Heart left ventricle (tissue), 16 donors: ENCODE measurements at regions of chr18 and their contacts with region 1.

Region 1: GRCh38 chr18:28176933-28177827 is at the start of gene CDH2:
- DNase-seq: peak; percentile 69 to 84 (median 78)
- ATAC-seq: peak; percentile 49 to 76 (median 66)
- H3K4me3 ChIP-seq: peak within 1 kb of the TSS; percentile 65 to 91 (median 75)
- H3K27ac ChIP-seq: peak within 1 kb of the TSS; percentile 75 to 97 (median 89)
- H3K4me1 ChIP-seq: peaks cover 0 to 11% (median 0%) of the 10 kb centered on the region in 12 donors
- H3K27me3 ChIP-seq: peaks cover 0 to 61% (median 13%) of the 10 kb centered on the region in 9 donors
- CTCF ChIP-seq: peak in 5 of 12 donors; percentile 12 to 35 (median 18)
- POLR2A ChIP-seq: peak; percentile 14 to 76
- total RNA-seq, gene CDH2: 313 to 594 (median 411) TPM

Region 2: DNA sequence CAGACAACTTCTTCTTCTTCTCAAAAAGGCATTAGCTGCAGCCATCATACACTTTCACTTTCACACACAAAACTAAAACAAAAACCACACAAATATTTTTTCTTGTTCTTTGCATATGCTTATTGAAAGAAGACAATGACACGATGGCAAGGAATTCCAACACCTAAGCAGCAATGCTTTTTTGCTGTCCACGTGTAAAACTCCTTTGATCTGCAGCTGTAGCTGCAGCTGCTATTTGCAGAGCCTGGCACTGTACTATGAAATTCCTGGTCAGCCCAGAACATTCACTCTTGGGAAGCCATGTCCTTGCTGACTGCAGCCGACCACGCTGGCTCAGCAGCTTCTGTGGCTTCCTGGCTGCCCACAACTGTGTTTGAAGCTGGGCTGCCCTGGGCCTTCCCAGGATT is 316.5 kb before region 1 on chr18:
- intact Hi-C with region 1: loop called in 1 of 10 experiments (anchors 5 kb)
- DNase-seq: peak in 4 of 5 donors; percentile 19 to 46 (median 34)
- ATAC-seq: peak; percentile 62 to 93 (median 81)
- H3K4me3 ChIP-seq: no peak overlapping the region
- H3K27ac ChIP-seq: peak overlapping the region in 5 of 12 donors; percentile 12 to 49 (median 38)
- H3K4me1 ChIP-seq: peaks cover 0 to 24% (median 0%) of the 10 kb centered on the region in 12 donors
- H3K27me3 ChIP-seq: no peaks in the 10 kb centered on the region
- CTCF ChIP-seq: no peak
- POLR2A ChIP-seq: no peak

Region 3: GRCh38 chr18:27996801-27997228 is 180.4 kb before region 1 on chr18:
- intact Hi-C with region 1: loop called in 2 of 10 experiments (anchors 10 kb)
- DNase-seq: no peak
- ATAC-seq: no peak
- H3K4me3 ChIP-seq: no peak overlapping the region
- H3K27ac ChIP-seq: peak overlapping the region in 4 of 12 donors; percentile 11 to 64 (median 34)
- H3K4me1 ChIP-seq: peaks cover 0 to 30% (median 10%) of the 10 kb centered on the region in 12 donors
- H3K27me3 ChIP-seq: no peaks in the 10 kb centered on the region
- CTCF ChIP-seq: no peak
- POLR2A ChIP-seq: no peak

Region 4: GRCh38 chr18:28003451-28003850 is 173.7 kb before region 1 on chr18:
- intact Hi-C with region 1: loop called in 3 of 10 experiments (anchors 5 to 10 kb)
- DNase-seq: peak in 1 of 5 donors; percentile 28
- ATAC-seq: peak; percentile 72 to 84 (median 82)
- H3K4me3 ChIP-seq: no peak overlapping the region
- H3K27ac ChIP-seq: peak overlapping the region in 10 of 12 donors; percentile 15 to 68 (median 49)
- H3K4me1 ChIP-seq: peaks cover 0 to 30% (median 8%) of the 10 kb centered on the region in 12 donors
- H3K27me3 ChIP-seq: no peaks in the 10 kb centered on the region
- CTCF ChIP-seq: no peak
- POLR2A ChIP-seq: no peak

Region 5: GRCh38 chr18:28013066-28013465 is 164.1 kb before region 1 on chr18:
- intact Hi-C with region 1: loop called in 5 of 10 experiments (anchors 5 to 10 kb)
- DNase-seq: no peak
- ATAC-seq: no peak
- H3K4me3 ChIP-seq: no peak overlapping the region
- H3K27ac ChIP-seq: no peak overlapping the region
- H3K4me1 ChIP-seq: peaks cover 0 to 34% (median 1%) of the 10 kb centered on the region in 12 donors
- H3K27me3 ChIP-seq: no peaks in the 10 kb centered on the region
- CTCF ChIP-seq: peak in 6 of 12 donors; percentile 7 to 41 (median 36)
- POLR2A ChIP-seq: no peak

Region 6: GRCh38 chr18:28115149-28115550 is 62.0 kb before region 1 on chr18:
- intact Hi-C with region 1: loop called in 6 of 10 experiments (anchors 1 to 5 kb)
- DNase-seq: no peak
- ATAC-seq: no peak
- H3K4me3 ChIP-seq: no peak overlapping the region
- H3K27ac ChIP-seq: peak overlapping the region in 10 of 12 donors; percentile 15 to 97 (median 86)
- H3K4me1 ChIP-seq: peaks cover 0 to 69% (median 17%) of the 10 kb centered on the region in 12 donors
- H3K27me3 ChIP-seq: no peaks in the 10 kb centered on the region
- CTCF ChIP-seq: no peak
- POLR2A ChIP-seq: no peak

Region 7: DNA sequence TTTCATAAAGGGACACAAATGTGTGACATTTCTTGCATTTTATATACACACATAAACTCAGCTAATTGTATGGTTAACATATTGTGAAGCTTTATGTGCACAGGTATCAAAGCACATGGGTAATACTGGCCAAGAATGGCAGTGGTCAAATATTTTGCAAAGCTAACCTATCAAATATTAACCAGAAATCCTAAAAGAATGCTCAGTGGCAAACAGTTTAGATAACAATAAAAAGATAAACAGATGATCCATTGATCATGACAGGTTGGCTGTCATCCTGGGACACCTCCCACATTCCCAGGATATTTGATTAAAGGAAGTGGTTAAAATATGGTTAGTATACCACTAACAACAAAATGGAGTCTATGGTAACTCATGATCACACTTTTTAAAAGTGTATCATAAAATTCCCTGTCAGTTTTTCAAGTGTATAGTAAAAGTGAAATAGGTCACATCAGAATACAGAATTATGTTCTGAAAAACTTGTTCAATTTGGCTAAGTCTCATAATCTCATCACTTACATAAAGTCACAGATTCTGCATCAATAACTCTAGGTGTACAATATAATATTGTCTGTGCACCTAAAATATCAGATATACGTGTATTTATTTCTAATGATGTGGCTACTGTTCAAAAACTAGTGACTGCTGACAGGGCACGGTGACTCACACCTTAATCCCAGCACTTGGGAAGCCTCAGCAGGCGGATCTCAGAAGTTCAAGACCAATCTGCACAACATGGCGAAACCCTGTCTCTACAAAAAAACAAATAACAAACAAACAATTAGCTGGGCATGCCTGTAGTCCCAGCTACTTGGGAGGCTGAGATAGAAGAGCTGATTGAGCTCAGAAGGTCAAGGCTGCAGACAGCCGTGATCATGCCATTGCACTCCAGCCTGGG is 49.2 kb before region 1 on chr18:
- intact Hi-C with region 1: loop called in 2 of 10 experiments (anchors 5 kb)
- DNase-seq: no peak
- ATAC-seq: peak in 3 of 4 donors; percentile 10 to 44 (median 16)
- H3K4me3 ChIP-seq: no peak overlapping the region
- H3K27ac ChIP-seq: peak overlapping the region; percentile 50 to 97 (median 76)
- H3K4me1 ChIP-seq: peaks cover 0 to 76% (median 13%) of the 10 kb centered on the region in 12 donors
- H3K27me3 ChIP-seq: no peaks in the 10 kb centered on the region
- CTCF ChIP-seq: no peak
- POLR2A ChIP-seq: no peak

Region 8: DNA sequence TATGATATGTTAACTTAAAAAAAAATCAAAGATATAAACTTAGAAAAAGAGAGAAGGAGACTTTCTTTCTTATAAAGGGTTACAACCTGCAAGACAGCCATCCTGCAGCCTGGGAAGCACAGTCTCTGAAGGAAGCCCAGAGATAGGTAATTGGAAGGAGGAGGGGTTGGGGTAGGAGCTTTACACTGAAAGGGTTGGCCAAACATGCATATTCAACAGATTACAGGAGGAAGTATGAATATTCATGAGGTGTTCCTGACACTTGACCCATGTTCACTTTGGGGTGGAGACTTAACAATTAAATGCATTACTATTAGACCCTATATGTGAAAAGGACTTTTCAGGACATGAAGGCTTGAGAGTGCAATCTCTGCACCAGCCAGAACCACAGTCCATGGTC is 71.5 kb after region 1 on chr18:
- intact Hi-C with region 1: no loop called
- DNase-seq: no peak
- ATAC-seq: no peak
- H3K4me3 ChIP-seq: no peak overlapping the region
- H3K27ac ChIP-seq: no peak overlapping the region
- H3K4me1 ChIP-seq: no peaks in the 10 kb centered on the region
- H3K27me3 ChIP-seq: no peaks in the 10 kb centered on the region
- CTCF ChIP-seq: no peak
- POLR2A ChIP-seq: no peak